BJ (cell line): ENCODE measurements at regions of chr1 and their contacts with region 1.

Region 1: DNA sequence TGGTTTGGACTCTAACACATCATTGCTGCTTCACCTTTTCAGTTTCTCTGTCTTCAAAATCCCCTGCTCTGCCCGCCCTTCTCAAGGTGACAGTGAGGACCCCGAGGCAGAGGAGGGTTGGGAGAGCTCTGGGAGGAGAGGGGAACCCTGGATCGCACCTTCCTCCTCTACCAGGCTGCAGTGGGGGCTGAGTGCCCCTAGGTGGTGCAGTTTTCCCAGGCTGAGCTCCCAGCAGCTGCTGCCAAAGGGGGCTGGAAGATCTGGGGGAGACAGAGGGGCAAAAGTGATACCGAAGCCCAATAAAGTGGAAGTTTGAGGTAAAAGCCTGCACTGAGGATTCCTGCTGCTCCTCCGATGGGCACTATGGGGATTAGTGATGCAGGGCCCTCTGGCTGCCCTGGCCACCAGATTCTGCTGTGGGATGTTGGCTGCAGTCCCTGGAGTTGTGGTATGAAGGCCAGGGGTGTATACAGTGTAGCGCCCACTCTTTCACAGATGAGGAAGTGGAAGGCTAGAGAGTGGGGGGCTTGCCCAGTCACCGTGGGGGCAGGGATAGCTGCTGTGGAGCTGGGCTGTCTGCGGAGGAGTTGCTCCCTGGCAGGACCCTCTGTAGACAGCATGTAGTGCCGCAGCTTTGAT is 40.7 kb upstream of the SCMH1 start:
- DNase-seq: no peak
- H3K4me3 ChIP-seq: no peak overlapping the region
- H3K27me3 ChIP-seq: peaks cover 30% of the 10 kb centered on the region
- CTCF ChIP-seq: peak; percentile 95

Region 2: GRCh38 chr1:41261926-41262618 is 20.7 kb before region 1 on chr1:
- CTCF ChIA-PET with region 1: interaction called, 24 read pairs
- POLR2A ChIA-PET with region 1: no interaction called
- DNase-seq: no peak
- H3K4me3 ChIP-seq: no peak overlapping the region
- H3K27me3 ChIP-seq: no peaks in the 10 kb centered on the region
- CTCF ChIP-seq: no peak

Region 3: GRCh38 chr1:41294216-41294615 is 11.4 kb after region 1 on chr1:
- CTCF ChIA-PET with region 1: interaction called, 31 read pairs
- POLR2A ChIA-PET with region 1: no interaction called
- DNase-seq: no peak
- H3K4me3 ChIP-seq: no peak overlapping the region
- H3K27me3 ChIP-seq: peaks cover 8% of the 10 kb centered on the region
- CTCF ChIP-seq: no peak

Region 4: DNA sequence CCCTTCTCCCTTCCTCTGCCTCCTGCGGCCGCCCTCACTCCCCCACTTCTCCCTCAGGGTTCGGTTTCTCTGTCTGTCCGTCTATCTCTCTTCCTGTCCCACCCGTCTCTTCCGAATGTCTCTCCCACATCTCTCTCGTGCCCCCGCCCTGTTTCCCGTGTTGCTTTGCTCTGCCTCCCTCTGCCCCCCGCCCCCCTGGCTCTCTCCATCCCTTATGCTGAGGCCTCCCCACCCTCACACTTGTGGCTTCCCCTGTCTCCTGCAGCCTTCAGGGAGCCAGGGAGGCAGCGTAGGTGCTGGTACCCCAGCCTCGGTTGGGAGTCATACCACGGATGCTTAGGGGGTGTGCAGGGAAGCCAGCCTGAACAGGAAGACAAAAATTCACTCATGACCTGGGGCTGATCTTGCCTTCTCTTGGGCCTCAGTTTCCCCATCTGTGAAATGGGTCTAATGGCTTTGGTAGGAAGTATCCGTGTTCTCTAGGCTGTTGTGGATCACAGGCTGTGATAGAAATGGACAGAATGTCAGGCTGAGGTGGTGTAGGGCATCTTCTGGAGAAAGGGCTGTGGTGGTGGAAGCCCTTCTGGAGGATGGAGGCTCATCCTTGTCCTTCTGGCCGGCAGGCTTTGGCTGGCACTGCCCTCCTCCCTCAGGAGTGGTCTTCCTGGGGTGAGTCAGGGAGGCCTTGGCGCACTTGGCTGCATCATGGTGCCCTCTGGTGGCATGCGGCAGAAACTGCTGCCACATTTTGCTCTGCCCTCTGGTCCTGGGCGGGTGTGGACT is 133.9 kb after region 1 on chr1:
- CTCF ChIA-PET with region 1: interaction called, 84 read pairs
- POLR2A ChIA-PET with region 1: no interaction called
- DNase-seq: no peak
- H3K4me3 ChIP-seq: no peak overlapping the region
- H3K27me3 ChIP-seq: no peaks in the 10 kb centered on the region; the same call in 1 of the 2 replicates
- CTCF ChIP-seq: peak; percentile 92

Region 5: GRCh38 chr1:41432481-41433280 is 149.9 kb after region 1 on chr1:
- CTCF ChIA-PET with region 1: interaction called, 38 read pairs
- POLR2A ChIA-PET with region 1: no interaction called
- DNase-seq: no peak
- H3K4me3 ChIP-seq: no peak overlapping the region
- H3K27me3 ChIP-seq: peaks cover 4% of the 10 kb centered on the region
- CTCF ChIP-seq: peak; percentile 92